ENCODE measurements at regions of chr17 and their contacts with region 1.

Region 1: DNA sequence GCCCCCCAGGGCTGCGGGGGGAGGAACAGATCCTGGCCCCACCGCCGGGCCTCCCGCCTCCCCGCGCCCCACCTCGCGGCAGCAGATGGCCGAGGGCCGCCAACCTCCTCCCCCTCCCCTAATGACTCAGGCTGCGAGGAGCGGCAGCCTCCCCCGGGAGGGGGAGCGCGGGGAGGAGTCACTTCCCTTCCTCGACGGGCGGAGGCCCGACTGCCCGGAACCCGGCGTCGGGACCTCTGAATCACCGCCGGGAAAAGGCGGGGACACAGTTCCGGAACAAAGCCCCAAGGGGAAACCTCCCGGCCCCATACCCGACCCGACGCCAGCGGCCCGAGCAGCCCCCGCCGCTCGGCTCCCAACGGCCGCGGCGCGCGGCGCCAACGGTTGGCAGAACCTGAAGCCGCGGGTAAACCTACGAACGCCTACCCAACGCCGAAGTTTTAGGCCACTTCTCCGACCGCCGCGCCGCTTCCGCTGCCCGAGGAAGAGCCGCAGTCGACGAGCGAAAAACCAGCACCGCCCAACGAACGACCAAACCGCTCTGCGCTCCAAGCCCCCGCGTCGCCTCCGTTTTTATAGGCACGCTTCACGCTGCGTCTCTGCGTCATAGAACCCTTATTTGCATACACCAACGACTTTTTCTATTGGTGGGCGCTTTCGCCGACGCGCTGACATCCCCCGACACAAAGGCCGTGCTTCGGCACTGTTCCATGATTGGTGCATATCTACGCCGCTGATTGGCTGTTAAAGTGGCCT is 5.2 kb upstream of the UNK start:
- DNase-seq: peak; percentile 100
- ATAC-seq: peak; percentile 81
- H3K4me3 ChIP-seq: peak overlapping the region; percentile 88
- H3K27ac ChIP-seq: peak overlapping the region; percentile 90
- H3K4me1 ChIP-seq: peaks cover 16% of the 10 kb centered on the region
- H3K27me3 ChIP-seq: no peaks in the 10 kb centered on the region
- CTCF ChIP-seq: no peak
- EP300 ChIP-seq: peak in 1 of 2 experiments; percentile 24; a peak in 1 of 4 replicates
- POLR2A ChIP-seq: peak; percentile 100
- RAD21 ChIP-seq: no peak

Region 2: GRCh38 chr17:75803883-75804282 is 24.5 kb after region 1 on chr17:
- CTCF ChIA-PET with region 1: interaction called, 13 read pairs
- POLR2A ChIA-PET with region 1: interaction called, 30 read pairs
- RAD21 ChIA-PET with region 1: interaction called, 22 read pairs
- SMC1A ChIA-PET with region 1: interaction called, 7 read pairs
- in situ Hi-C with region 1: no loop called
- intact Hi-C with region 1: no loop called
- DNase-seq: no peak
- ATAC-seq: no peak
- H3K4me3 ChIP-seq: no peak overlapping the region
- H3K27ac ChIP-seq: no peak overlapping the region
- H3K4me1 ChIP-seq: peaks cover 3% of the 10 kb centered on the region
- H3K27me3 ChIP-seq: no peaks in the 10 kb centered on the region
- CTCF ChIP-seq: no peak
- EP300 ChIP-seq: no peak
- POLR2A ChIP-seq: no peak
- RAD21 ChIP-seq: no peak

Region 3: GRCh38 chr17:75808905-75809715 is 29.7 kb after region 1 on chr17:
- CTCF ChIA-PET with region 1: interaction called, 13 read pairs
- POLR2A ChIA-PET with region 1: interaction called, 30 read pairs
- RAD21 ChIA-PET with region 1: interaction called, 22 read pairs
- SMC1A ChIA-PET with region 1: interaction called, 7 read pairs
- in situ Hi-C with region 1: no loop called
- intact Hi-C with region 1: no loop called
- DNase-seq: peak; percentile 57
- ATAC-seq: peak; percentile 90
- H3K4me3 ChIP-seq: no peak overlapping the region
- H3K27ac ChIP-seq: 0 out of 2 replicates have a peak overlapping the region, but pooled peaks have one; percentile 6
- H3K4me1 ChIP-seq: peaks cover 9% of the 10 kb centered on the region
- H3K27me3 ChIP-seq: no peaks in the 10 kb centered on the region
- CTCF ChIP-seq: no peak
- EP300 ChIP-seq: no peak
- POLR2A ChIP-seq: no peak
- RAD21 ChIP-seq: no peak